Posterior vena cava (tissue), 2 donors: ENCODE measurements at regions of chr7 and their contacts with region 1.

Region 1: GRCh38 chr7:95303038-95303905 is 21.1 kb downstream of the PON1 start:
- DNase-seq: no peak

Region 2: DNA sequence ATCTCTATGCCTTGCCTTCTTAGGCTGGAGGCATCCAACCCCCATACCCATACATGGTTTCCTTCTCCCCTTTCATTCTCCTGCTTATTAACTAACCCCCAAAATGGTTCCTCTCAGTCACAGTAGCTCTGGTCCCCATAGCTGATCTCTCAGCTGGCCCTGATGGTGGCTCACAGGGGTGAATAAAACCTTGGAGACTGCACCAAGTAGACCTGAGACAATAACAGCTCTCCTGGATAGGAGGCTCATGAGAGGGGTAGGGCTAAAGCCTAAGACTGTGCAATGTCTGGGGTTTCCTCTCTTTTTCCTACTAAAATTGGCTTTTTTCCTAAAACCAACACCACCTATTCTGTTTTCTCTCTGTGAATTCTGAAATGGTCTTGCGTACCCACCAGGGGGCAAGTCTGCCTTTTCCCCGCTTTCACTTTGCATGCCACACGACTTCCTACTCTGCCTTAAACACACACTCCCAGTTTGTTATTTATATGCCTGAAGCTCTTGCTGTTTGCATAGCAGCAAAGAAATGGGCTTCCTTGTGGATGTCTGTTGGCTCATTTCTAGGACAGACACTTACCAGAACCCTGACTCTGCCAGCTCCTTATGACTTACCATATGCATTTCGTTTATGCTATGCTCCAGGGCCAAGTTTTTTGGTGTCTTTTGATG is 39.5 kb after region 1 on chr7:
- intact Hi-C with region 1: loop called in 1 of 2 experiments (anchors 2 kb)
- DNase-seq: no peak

Region 3: DNA sequence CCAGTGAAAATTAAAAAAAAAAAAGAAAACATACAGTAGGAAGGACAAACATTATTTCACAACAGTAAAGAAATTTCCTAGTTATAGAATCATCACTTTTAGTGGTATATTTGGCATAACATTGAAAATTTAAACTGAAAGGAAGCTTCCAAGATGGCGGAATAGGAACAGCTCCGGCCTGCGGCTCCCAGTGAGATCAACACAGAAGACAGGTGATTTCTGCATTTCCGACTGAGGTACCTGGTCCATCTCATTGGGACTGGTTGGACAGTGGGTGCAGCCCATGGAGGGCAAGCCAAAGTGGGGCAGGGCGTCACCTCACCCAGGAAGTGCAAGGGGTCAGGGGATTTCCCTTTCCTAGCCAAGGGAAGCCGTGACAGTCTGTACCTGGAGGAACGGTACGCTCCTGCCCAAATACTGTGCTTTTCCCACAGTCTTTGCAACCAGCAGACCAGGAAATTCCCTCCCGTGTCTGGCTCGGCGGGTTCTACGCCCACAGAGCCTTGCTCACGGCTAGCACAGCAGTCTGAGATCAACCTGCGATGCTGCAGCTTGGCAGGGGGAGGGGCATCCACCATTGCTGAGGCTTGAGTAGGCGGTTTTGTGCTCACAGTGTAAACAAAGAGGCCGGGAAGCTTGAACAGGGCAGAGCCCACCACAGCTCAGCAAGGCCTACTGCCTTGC is 73.5 kb after region 1 on chr7:
- intact Hi-C with region 1: no loop called
- DNase-seq: peak; percentile 70

Region 4: GRCh38 chr7:95916573-95917297 is 613.5 kb after region 1 on chr7:
- intact Hi-C with region 1: no loop called
- DNase-seq: peak; percentile 93